ENCODE measurements at regions of chr9 and their contacts with region 1.

Region 1: DNA sequence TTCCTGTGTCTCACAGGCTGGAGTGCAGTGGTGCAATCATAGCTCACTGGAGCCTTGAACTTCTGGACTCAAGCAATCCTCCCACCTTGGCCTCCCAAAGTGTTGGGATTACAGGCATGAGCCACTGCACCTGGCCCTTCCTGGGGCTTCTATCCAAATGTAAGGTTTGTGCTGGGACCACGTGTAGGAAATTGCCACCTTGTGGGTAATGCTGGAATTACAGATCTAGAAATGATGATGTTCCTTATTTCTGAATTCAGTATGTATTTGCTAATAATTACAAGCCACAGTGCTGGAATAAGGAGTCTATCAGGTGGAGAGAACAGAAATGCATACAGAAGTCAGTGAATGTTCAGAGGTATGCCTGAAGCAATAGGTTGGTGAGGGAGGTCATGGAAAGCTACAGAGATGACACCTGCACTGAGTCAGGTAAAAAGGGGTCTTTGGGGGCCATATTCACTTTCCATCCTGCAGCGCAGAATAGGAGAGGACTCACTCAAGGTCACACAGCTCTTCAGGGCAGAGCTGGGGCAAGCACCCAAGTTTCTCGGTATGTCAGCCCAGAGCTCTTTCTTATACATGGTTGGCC is 8.8 kb upstream of the IGFBPL1 start:
- DNase-seq: peak; percentile 13
- ATAC-seq: peak; percentile 23
- H3K4me3 Mint-ChIP-seq: no peak overlapping the region
- H3K27ac Mint-ChIP-seq: no peak overlapping the region
- H3K4me1 Mint-ChIP-seq: peaks cover 6% of the 10 kb centered on the region
- H3K27me3 Mint-ChIP-seq: peaks cover 2% of the 10 kb centered on the region

Region 2: GRCh38 chr9:38361473-38361850 is 71.6 kb before region 1 on chr9:
- CTCF ChIA-PET with region 1: no interaction called
- POLR2A ChIA-PET with region 1: no interaction called
- intact Hi-C with region 1: no loop called
- DNase-seq: no peak
- ATAC-seq: no peak
- H3K4me3 Mint-ChIP-seq: no peak overlapping the region
- H3K27ac Mint-ChIP-seq: no peak overlapping the region
- H3K4me1 Mint-ChIP-seq: peaks cover 4% of the 10 kb centered on the region
- H3K27me3 Mint-ChIP-seq: peaks cover 4% of the 10 kb centered on the region

Region 3: DNA sequence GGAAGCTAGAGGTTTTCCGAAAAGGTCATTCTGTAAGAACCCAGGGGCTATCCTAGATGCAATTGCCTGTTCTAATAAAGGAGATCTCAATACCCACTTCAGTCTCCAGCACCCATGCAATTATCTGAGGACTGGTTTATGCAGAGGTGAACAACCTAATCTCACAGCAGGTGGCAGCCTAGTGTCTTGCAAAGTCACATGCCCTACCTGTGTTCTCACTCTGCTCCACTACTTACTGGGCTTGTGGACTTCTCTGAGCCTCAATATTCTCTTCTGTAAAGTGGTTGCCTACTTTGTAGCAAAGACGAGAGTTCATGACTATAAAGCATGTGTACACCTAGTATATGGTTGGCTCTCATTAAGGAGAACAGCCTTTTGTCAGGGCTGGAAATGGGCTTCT is 61.5 kb before region 1 on chr9:
- CTCF ChIA-PET with region 1: interaction called, 3 read pairs
- POLR2A ChIA-PET with region 1: no interaction called
- intact Hi-C with region 1: loop called in 1 of 2 experiments (anchors 1 kb)
- DNase-seq: peak; percentile 47
- ATAC-seq: peak; percentile 75
- H3K4me3 Mint-ChIP-seq: no peak overlapping the region
- H3K27ac Mint-ChIP-seq: no peak overlapping the region
- H3K4me1 Mint-ChIP-seq: no peaks in the 10 kb centered on the region
- H3K27me3 Mint-ChIP-seq: peaks cover 2% of the 10 kb centered on the region

Region 4: GRCh38 chr9:38392235-38393127 is 40.5 kb before region 1 on chr9 and contains the start of gene ALDH1B1:
- CTCF ChIA-PET with region 1: interaction called, 3 read pairs
- POLR2A ChIA-PET with region 1: no interaction called
- intact Hi-C with region 1: loop called in 1 of 2 experiments (anchors 1 kb)
- DNase-seq: peak; percentile 81
- ATAC-seq: peak; percentile 99
- H3K4me3 Mint-ChIP-seq: peak within 1 kb of the TSS; percentile 91
- H3K27ac Mint-ChIP-seq: peak within 1 kb of the TSS; percentile 83
- H3K4me1 Mint-ChIP-seq: peaks cover 13% of the 10 kb centered on the region
- H3K27me3 Mint-ChIP-seq: peaks cover 6% of the 10 kb centered on the region
- total RNA-seq, gene ALDH1B1: 20.3 to 21.8 TPM

Region 5: GRCh38 chr9:38417003-38417945 is 15.7 kb before region 1 on chr9:
- CTCF ChIA-PET with region 1: interaction called, 14 read pairs
- POLR2A ChIA-PET with region 1: no interaction called
- intact Hi-C with region 1: no loop called
- DNase-seq: peak; percentile 77
- ATAC-seq: peak; percentile 78
- H3K4me3 Mint-ChIP-seq: no peak overlapping the region
- H3K27ac Mint-ChIP-seq: no peak overlapping the region
- H3K4me1 Mint-ChIP-seq: no peaks in the 10 kb centered on the region
- H3K27me3 Mint-ChIP-seq: peaks cover 8% of the 10 kb centered on the region